Posterior vena cava (tissue), 2 donors: ENCODE measurements at regions of chr7 and their contacts with region 1.

Region 1: DNA sequence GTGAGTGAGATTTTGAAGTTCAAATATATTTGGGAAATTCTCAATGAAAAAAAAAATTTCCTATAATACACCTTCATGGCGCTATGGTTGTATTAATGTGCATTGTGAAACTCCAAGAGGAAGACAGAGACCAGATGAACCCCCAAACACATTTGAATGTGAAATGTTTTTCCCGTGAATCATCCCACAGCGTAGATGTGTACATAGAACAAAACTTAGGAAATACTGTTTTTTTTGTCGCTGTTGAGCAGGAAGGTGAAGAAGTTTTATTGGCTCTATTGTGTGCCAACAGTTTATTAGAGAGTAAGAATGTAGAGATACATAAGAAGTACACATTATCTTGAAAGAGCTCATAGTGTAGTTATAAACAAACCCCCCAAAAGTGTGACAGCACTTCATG is 134.0 kb downstream of the KCND2 start:
- DNase-seq: no peak

Region 2: DNA sequence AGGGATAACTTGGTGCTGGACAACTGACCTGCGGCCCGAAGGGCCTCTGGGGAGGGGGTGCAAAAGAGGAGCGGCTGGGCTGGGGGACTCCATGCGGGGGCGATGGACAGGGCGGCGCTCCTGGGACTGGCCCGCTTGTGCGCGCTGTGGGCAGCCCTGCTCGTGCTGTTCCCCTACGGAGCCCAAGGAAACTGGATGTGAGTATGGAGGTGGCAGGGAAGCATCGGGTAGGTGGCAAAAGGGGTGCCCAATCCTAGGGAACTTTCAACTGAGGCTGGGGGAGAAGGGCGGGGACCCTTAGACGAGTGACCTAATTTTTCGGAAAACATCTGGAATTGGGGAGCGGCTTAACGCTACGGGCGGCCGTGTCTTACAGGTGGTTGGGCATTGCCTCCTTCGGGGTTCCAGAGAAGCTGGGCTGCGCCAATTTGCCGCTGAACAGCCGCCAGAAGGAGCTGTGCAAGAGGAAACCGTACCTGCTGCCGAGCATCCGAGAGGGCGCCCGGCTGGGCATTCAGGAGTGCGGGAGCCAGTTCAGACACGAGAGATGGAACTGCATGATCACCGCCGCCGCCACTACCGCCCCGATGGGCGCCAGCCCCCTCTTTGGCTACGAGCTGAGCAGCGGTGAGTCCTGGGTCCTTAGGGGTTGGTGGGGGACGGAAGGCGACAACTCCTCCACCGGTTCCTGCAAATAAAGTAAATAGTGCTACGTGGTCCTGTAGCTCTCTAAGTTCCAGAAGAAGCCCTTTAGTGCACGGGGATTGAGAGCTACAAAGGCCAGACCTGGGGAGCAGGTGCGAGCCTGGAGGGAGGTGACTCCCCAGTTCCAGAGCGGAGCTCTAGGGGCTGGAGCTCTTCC is 922.4 kb after region 1 on chr7:
- intact Hi-C with region 1: loop called in 1 of 2 experiments (anchors 5 kb)
- DNase-seq: no peak